ENCODE measurements at regions of chr12 and their contacts with region 1.

Region 1: DNA sequence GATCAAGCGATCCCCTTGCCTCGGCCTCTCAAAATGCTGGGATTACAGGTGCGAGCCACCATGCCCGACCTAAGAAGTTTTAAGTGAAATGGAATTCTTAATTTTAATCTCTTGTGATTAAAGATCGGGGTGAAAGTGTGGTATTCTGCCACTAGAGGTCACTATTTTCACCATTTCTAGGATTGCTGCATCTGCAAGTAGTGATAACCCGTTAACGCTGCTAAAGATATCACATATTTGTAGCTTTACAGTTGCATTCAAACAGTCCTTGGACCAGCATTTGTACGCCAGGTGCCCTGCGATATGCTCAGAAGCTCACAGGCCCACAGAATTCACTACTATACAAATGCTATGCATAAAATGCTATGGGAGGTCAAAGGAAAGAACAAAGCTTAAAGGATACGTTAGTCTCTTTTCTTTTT is 19.3 kb downstream of the CCDC62 start:
- DNase-seq: no peak
- ATAC-seq: peak; percentile 88
- H3K4me3 ChIP-seq: no peak overlapping the region
- H3K27ac ChIP-seq: no peak overlapping the region
- H3K4me1 ChIP-seq: no peaks in the 10 kb centered on the region
- H3K27me3 ChIP-seq: no peaks in the 10 kb centered on the region
- CTCF ChIP-seq: peak; percentile 53 to 67 (median 64); a peak in 5 of 6 replicates
- EP300 ChIP-seq: no peak
- POLR2A ChIP-seq: no peak
- RAD21 ChIP-seq: peak; percentile 74

Region 2: GRCh38 chr12:122807651-122808050 is 14.0 kb after region 1 on chr12:
- CTCF ChIA-PET with region 1: interaction called, 15 read pairs
- POLR2A ChIA-PET with region 1: interaction called, 3 read pairs
- RAD21 ChIA-PET with region 1: interaction called, 5 read pairs
- SMC1A ChIA-PET with region 1: interaction called, 7 read pairs
- in situ Hi-C with region 1: no loop called
- intact Hi-C with region 1: no loop called
- DNase-seq: no peak
- ATAC-seq: no peak
- H3K4me3 ChIP-seq: no peak overlapping the region
- H3K27ac ChIP-seq: no peak overlapping the region
- H3K4me1 ChIP-seq: peaks cover 10% of the 10 kb centered on the region
- H3K27me3 ChIP-seq: no peaks in the 10 kb centered on the region
- CTCF ChIP-seq: no peak
- EP300 ChIP-seq: no peak
- POLR2A ChIP-seq: no peak
- RAD21 ChIP-seq: no peak

Region 3: GRCh38 chr12:122825773-122826724 is 32.4 kb after region 1 on chr12:
- CTCF ChIA-PET with region 1: interaction called, 36 read pairs
- POLR2A ChIA-PET with region 1: no interaction called
- RAD21 ChIA-PET with region 1: interaction called, 5 read pairs
- SMC1A ChIA-PET with region 1: interaction called, 9 read pairs
- in situ Hi-C with region 1: no loop called
- intact Hi-C with region 1: no loop called
- DNase-seq: no peak
- ATAC-seq: no peak
- H3K4me3 ChIP-seq: no peak overlapping the region
- H3K27ac ChIP-seq: no peak overlapping the region
- H3K4me1 ChIP-seq: no peaks in the 10 kb centered on the region; the same call in 1 of the 2 replicates
- H3K27me3 ChIP-seq: peaks cover 0 to 6% of the 10 kb centered on the region in 2 experiments; a peak in 1 of 4 replicates
- CTCF ChIP-seq: no peak
- EP300 ChIP-seq: no peak
- POLR2A ChIP-seq: no peak
- RAD21 ChIP-seq: no peak

Region 4: GRCh38 chr12:122836027-122836921 is 42.6 kb after region 1 on chr12:
- CTCF ChIA-PET with region 1: interaction called, 9 read pairs
- POLR2A ChIA-PET with region 1: interaction called, 4 read pairs
- RAD21 ChIA-PET with region 1: interaction called, 15 read pairs
- SMC1A ChIA-PET with region 1: interaction called, 7 read pairs
- in situ Hi-C with region 1: no loop called
- intact Hi-C with region 1: loop called (anchors 5 kb)
- DNase-seq: peak; percentile 38
- ATAC-seq: peak; percentile 76
- H3K4me3 ChIP-seq: peak overlapping the region; percentile 91
- H3K27ac ChIP-seq: no peak overlapping the region
- H3K4me1 ChIP-seq: peaks cover 7% of the 10 kb centered on the region
- H3K27me3 ChIP-seq: peaks cover 2 to 3% of the 10 kb centered on the region in 2 experiments; a peak in 2 of 4 replicates
- CTCF ChIP-seq: no peak
- EP300 ChIP-seq: peak in 1 of 2 experiments; percentile 8; a peak in 1 of 4 replicates
- POLR2A ChIP-seq: no peak
- RAD21 ChIP-seq: no peak

Region 5: GRCh38 chr12:122871851-122872780 is 78.4 kb after region 1 on chr12:
- CTCF ChIA-PET with region 1: interaction called, 7 read pairs
- POLR2A ChIA-PET with region 1: no interaction called
- RAD21 ChIA-PET with region 1: interaction called, 3 read pairs
- SMC1A ChIA-PET with region 1: interaction called, 12 read pairs
- in situ Hi-C with region 1: no loop called
- intact Hi-C with region 1: no loop called
- DNase-seq: peak; percentile 52
- ATAC-seq: peak; percentile 52
- H3K4me3 ChIP-seq: peak overlapping the region; percentile 57; the same call in 1 of the 2 replicates
- H3K27ac ChIP-seq: peak overlapping the region; percentile 64
- H3K4me1 ChIP-seq: peaks cover 45% of the 10 kb centered on the region
- H3K27me3 ChIP-seq: no peaks in the 10 kb centered on the region
- CTCF ChIP-seq: no peak
- EP300 ChIP-seq: no peak
- POLR2A ChIP-seq: 0 out of 2 replicates have a peak, but pooled peaks have one; percentile 17
- RAD21 ChIP-seq: no peak

Region 6: DNA sequence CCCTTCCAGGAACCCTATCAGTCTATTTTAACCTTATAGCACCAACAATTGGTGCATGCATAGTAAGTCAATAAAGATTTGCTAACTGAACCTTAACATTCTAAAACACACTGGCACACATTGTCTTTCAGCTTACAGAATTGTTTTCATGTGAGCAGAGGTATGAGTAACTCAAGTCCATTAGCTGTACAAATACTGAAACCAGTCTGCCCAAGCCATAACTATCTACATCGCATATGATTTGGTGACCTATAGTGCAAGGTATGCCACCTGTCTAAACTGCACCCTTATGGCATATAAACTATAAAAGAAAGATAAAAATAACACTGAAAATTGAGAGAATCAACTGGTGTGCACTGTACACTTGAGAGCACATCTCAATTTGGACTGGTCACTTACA is 536.1 kb after region 1 on chr12:
- CTCF ChIA-PET with region 1: no interaction called
- POLR2A ChIA-PET with region 1: no interaction called
- RAD21 ChIA-PET with region 1: no interaction called
- SMC1A ChIA-PET with region 1: no interaction called
- in situ Hi-C with region 1: no loop called
- intact Hi-C with region 1: no loop called
- DNase-seq: no peak
- ATAC-seq: no peak
- H3K4me3 ChIP-seq: no peak overlapping the region
- H3K27ac ChIP-seq: no peak overlapping the region
- H3K4me1 ChIP-seq: peaks cover under 1% of the 10 kb centered on the region
- H3K27me3 ChIP-seq: no peaks in the 10 kb centered on the region
- CTCF ChIP-seq: no peak
- EP300 ChIP-seq: no peak
- POLR2A ChIP-seq: no peak
- RAD21 ChIP-seq: no peak

Measured in GM12878 (cell line).